CD4-positive, alpha-beta T cell (primary cell): ENCODE measurements at regions of chr22 and their contacts with region 1.

Region 1: DNA sequence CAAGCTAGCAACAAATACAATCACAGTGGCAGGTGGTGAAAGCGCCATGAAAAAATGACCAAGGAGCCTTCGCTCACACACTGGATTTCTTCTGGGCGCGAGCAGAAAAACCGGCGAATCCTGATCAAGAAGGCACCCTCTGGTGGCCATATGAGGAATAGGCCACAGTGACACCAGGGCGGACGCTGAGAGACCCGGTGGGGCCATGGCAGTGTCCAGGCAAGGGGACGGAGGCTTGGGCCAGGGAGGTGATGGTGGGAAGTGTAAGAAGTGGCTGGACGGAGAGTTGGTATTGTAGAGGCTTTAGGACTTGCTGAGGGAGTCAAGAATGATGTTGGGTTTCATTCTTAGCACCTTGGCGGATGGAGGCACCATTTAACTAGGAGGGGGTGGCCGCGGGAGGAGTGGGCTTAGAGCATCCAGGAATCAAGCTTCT is 16.9 kb upstream of the RAC2 start:
- DNase-seq: peak in 13 of 14 experiments; percentile 49 to 81 (median 59)
- ATAC-seq: peak; percentile 80
- H3K4me3 ChIP-seq: no peak overlapping the region
- H3K4me3 Mint-ChIP-seq: no peak overlapping the region
- H3K27ac ChIP-seq: no peak overlapping the region
- H3K27ac Mint-ChIP-seq: peak overlapping the region; percentile 12
- H3K4me1 ChIP-seq: peaks cover 25% of the 10 kb centered on the region
- H3K4me1 Mint-ChIP-seq: peaks cover 24% of the 10 kb centered on the region
- H3K27me3 ChIP-seq: no peaks in the 10 kb centered on the region
- H3K27me3 Mint-ChIP-seq: no peaks in the 10 kb centered on the region
- CTCF ChIP-seq: peak; percentile 85

Region 2: DNA sequence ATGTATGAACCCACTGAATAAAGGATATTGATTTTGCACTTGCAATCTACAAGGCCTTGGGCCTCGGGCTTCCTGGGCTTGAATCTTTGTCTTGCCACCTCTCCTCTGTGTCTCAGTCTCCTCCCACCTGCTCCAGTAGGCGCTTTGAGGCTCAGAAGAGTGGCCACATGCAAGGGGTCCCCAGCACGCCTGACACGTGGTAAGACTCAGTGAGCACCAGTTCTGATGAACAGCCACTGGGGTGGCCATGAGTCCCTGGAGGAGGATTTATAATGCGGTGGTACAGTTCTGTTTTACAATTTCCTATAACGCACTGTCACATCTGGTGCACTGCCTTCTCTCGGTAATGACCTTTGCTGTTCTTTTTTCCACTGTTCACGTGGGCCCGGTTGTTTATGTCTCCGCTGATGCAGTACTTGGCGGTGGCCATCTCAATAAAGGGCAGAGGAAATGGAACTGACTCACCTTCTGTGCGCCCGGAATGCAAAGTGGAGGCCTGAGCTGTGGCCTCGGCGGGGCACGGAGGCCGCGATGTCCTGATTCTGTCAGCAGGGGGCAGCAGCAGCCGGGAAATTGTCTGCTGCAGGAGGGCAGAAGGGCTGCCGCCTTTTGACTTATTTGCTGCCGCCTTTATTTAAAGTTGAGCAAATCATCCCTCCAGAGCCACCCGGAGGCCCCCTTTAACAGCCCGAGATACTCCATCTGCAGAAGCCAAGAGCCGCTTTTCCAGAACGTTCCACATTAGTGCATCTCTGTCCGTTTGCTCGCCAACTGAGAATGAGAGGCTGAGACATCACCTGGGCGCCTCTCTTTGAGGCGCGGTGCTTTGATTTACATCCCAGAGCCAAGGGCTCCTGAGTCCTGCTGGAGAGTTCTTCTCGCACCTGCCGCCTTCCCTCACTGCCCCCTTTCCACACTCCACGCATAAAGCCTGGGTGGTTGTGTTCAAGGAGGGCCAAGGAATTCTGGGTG is 479.0 kb before region 1 on chr22:
- CTCF ChIA-PET with region 1: no interaction called
- POLR2A ChIA-PET with region 1: no interaction called
- intact Hi-C with region 1: loop called in 1 of 2 experiments (anchors 2 kb)
- DNase-seq: peak; percentile 73 to 95 (median 87)
- ATAC-seq: peak; percentile 96
- H3K4me3 ChIP-seq: no peak overlapping the region
- H3K4me3 Mint-ChIP-seq: no peak overlapping the region
- H3K27ac ChIP-seq: no peak overlapping the region
- H3K27ac Mint-ChIP-seq: peak overlapping the region; percentile 33
- H3K4me1 ChIP-seq: peaks cover 16% of the 10 kb centered on the region
- H3K4me1 Mint-ChIP-seq: peaks cover 20% of the 10 kb centered on the region
- H3K27me3 ChIP-seq: no peaks in the 10 kb centered on the region
- H3K27me3 Mint-ChIP-seq: no peaks in the 10 kb centered on the region
- CTCF ChIP-seq: peak; percentile 97

Region 3: DNA sequence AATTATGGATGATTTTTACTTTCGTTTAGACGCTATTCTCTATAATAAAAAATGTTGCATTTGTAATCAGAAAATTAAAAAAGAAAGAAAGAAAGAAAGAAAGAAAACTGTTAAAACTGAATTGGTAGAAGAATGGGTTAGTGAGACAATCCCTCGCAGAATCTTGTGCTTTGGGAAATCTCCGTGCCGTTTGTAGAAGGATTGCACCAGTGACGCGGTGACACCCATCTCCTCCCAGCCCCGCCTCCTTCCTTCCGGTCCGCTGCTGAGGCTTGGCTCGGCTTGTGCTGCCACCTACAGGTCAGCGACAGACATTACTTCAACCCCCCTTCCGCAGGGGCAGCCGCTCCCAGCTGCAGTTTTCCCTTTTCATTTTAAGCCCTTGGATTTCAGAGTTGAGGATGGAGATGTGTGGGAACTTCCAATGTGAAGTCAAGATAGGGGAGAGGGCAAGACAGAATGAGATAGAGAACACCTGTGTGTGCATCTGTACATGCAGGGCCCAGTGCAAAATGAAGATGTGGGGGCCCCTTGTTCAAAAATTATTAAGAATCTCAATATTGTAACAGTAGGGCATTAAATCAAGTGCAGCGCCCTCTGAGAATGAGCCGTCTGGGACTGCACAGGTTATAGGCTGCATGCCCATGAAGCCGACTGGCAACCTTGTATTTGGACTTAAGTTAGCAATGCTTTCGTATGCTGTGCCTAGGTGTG is 282.8 kb before region 1 on chr22:
- CTCF ChIA-PET with region 1: no interaction called
- POLR2A ChIA-PET with region 1: no interaction called
- intact Hi-C with region 1: no loop called
- DNase-seq: peak; percentile 83 to 95 (median 88)
- ATAC-seq: peak; percentile 88
- H3K4me3 ChIP-seq: peak overlapping the region; percentile 77
- H3K4me3 Mint-ChIP-seq: peak overlapping the region; percentile 97
- H3K27ac ChIP-seq: peak overlapping the region; percentile 16 to 62
- H3K27ac Mint-ChIP-seq: peak overlapping the region; percentile 92
- H3K4me1 ChIP-seq: peaks cover 15% of the 10 kb centered on the region
- H3K4me1 Mint-ChIP-seq: peaks cover 8% of the 10 kb centered on the region
- H3K27me3 ChIP-seq: peaks cover 0 to 5% of the 10 kb centered on the region in 2 experiments
- H3K27me3 Mint-ChIP-seq: peaks cover 5% of the 10 kb centered on the region
- CTCF ChIP-seq: peak; percentile 88

Region 4: DNA sequence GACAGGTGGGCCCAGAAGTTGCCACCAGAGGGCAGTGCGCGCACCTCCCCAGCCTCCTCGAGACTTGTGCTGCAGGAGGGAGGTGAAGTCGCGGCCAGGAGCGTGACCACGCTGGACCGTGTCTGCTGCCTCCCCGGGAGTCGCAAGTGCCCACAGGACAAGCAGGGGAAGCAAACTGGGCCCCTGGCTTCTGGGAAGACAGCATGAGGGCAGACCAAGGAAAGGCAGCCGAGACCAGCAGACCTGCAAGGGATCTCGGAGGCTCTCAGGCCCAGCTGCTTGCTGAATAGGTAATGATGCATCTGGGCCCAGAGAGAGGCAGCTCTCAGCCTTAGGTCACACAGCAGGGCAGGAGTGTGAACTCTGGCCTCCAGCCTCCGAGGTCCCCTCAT is 94.2 kb before region 1 on chr22:
- CTCF ChIA-PET with region 1: interaction called, 4 read pairs
- POLR2A ChIA-PET with region 1: no interaction called
- intact Hi-C with region 1: loop called (anchors 2 kb)
- DNase-seq: peak; percentile 68 to 91 (median 82)
- ATAC-seq: peak; percentile 59
- H3K4me3 ChIP-seq: peak overlapping the region; percentile 53
- H3K4me3 Mint-ChIP-seq: peak overlapping the region; percentile 69
- H3K27ac ChIP-seq: no peak overlapping the region
- H3K27ac Mint-ChIP-seq: peak overlapping the region; percentile 51
- H3K4me1 ChIP-seq: peaks cover 91% of the 10 kb centered on the region
- H3K4me1 Mint-ChIP-seq: peaks cover 82% of the 10 kb centered on the region
- H3K27me3 ChIP-seq: no peaks in the 10 kb centered on the region
- H3K27me3 Mint-ChIP-seq: no peaks in the 10 kb centered on the region
- CTCF ChIP-seq: peak; percentile 88

Region 5: GRCh38 chr22:37193629-37194191 is 67.2 kb before region 1 on chr22:
- CTCF ChIA-PET with region 1: interaction called, 21 read pairs
- POLR2A ChIA-PET with region 1: no interaction called
- intact Hi-C with region 1: no loop called
- DNase-seq: peak in 4 of 14 experiments; percentile 47 to 81 (median 70)
- ATAC-seq: peak; percentile 60
- H3K4me3 ChIP-seq: peak overlapping the region; percentile 18
- H3K4me3 Mint-ChIP-seq: peak overlapping the region; percentile 9
- H3K27ac ChIP-seq: peak overlapping the region; percentile 46 to 47
- H3K27ac Mint-ChIP-seq: peak overlapping the region; percentile 100
- H3K4me1 ChIP-seq: peaks cover 53% of the 10 kb centered on the region
- H3K4me1 Mint-ChIP-seq: peaks cover 60% of the 10 kb centered on the region
- H3K27me3 ChIP-seq: no peaks in the 10 kb centered on the region
- H3K27me3 Mint-ChIP-seq: no peaks in the 10 kb centered on the region
- CTCF ChIP-seq: no peak

Region 6: DNA sequence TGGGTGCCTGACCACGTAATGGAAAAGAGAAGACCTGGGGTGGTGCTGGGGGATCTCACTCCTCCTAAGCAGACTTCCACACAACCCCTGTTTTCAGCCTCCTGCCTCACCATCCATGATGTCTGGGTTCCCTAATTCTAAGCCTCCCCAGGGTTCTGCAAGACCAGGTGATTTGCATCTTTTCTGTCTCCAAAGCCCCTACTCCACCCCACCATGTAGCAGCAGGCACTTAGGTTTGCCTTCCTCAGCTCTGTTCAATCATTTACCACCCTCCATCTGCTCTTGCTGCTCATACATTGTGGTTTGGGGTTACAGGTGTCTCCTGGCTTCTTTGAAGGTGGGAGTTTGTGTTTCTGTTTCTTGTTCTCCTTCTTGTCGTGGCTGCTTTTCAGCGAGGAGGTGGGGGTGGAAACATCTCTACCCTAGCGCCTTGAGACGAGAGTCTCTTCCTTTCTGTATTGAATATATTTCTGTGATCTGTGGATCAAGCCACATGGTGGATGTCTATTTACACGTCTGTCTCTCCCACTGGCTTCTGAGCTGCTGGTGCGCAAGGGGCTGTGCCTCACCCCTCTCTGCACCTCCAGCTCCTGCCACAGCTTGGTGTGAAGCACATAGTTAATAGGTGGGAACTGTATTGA is 42.0 kb before region 1 on chr22:
- CTCF ChIA-PET with region 1: interaction called, 12 read pairs
- POLR2A ChIA-PET with region 1: interaction called, 6 read pairs
- intact Hi-C with region 1: loop called (anchors 2 to 5 kb)
- DNase-seq: peak; percentile 54 to 93 (median 74)
- ATAC-seq: peak; percentile 80
- H3K4me3 ChIP-seq: peak overlapping the region; percentile 49
- H3K4me3 Mint-ChIP-seq: peak overlapping the region; percentile 64
- H3K27ac ChIP-seq: peak overlapping the region; percentile 71 to 82
- H3K27ac Mint-ChIP-seq: peak overlapping the region; percentile 84
- H3K4me1 ChIP-seq: peaks cover 76% of the 10 kb centered on the region
- H3K4me1 Mint-ChIP-seq: peaks cover 93% of the 10 kb centered on the region
- H3K27me3 ChIP-seq: no peaks in the 10 kb centered on the region
- H3K27me3 Mint-ChIP-seq: no peaks in the 10 kb centered on the region
- CTCF ChIP-seq: no peak

Region 7: GRCh38 chr22:37229805-37230672 is 30.9 kb before region 1 on chr22:
- CTCF ChIA-PET with region 1: interaction called, 14 read pairs
- POLR2A ChIA-PET with region 1: interaction called, 6 read pairs
- intact Hi-C with region 1: loop called in 1 of 2 experiments (anchors 2 kb)
- DNase-seq: peak; percentile 79 to 96 (median 88)
- ATAC-seq: peak; percentile 78
- H3K4me3 ChIP-seq: peak overlapping the region; percentile 35
- H3K4me3 Mint-ChIP-seq: peak overlapping the region; percentile 83
- H3K27ac ChIP-seq: peak overlapping the region; percentile 96 to 97
- H3K27ac Mint-ChIP-seq: peak overlapping the region; percentile 97
- H3K4me1 ChIP-seq: peaks cover 97% of the 10 kb centered on the region
- H3K4me1 Mint-ChIP-seq: peaks cover 90% of the 10 kb centered on the region
- H3K27me3 ChIP-seq: no peaks in the 10 kb centered on the region
- H3K27me3 Mint-ChIP-seq: no peaks in the 10 kb centered on the region
- CTCF ChIP-seq: no peak

Region 8: DNA sequence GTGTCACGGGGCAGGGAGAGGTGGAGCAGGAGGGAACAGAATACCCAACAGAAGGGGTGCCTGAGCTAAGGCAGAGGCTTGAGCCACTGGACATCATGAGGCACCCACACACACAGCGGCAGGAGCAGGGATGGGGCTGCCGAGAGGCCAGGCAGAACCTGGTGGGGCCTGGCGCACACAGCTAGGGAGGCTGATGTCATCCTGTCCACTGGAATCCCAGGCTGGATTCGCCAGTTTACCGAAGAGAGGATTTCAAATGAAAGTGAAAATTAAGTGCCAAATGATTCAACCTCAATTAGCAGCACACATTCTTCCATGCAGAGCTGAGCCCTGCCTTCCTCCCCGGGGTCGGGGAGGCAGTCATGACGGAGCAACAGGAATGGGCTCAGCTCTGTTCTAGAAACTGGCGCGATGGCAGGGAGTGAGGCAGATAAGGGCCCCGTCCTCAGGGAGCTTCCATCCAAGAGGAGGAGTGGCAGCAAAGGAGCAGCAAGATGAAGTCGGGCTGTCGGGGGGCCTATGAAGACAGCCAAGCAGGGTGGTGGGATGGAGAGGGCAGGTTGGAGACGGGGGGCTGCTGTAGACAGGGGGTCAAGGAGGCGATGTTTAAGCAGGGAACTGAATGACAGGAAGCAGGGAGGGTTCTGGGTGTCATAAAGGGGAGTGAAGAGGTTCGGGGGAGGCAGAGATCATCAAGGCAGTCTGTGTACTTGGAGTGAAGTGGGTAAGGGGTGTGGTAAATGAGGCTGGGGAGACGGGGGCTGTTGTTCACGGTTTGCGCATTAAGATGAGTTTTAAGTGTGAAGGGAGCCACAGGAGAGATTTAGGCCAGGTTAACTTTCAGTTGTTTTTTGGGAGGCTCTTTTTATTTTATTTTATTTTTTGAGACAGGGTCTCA is 23.3 kb before region 1 on chr22:
- CTCF ChIA-PET with region 1: interaction called, 139 read pairs
- POLR2A ChIA-PET with region 1: interaction called, 57 read pairs
- intact Hi-C with region 1: loop called (anchors 1 kb)
- DNase-seq: peak in 5 of 14 experiments; percentile 18 to 46 (median 38)
- ATAC-seq: peak; percentile 13
- H3K4me3 ChIP-seq: peak overlapping the region; percentile 34
- H3K4me3 Mint-ChIP-seq: peak overlapping the region; percentile 95
- H3K27ac ChIP-seq: peak overlapping the region; percentile 73 to 96
- H3K27ac Mint-ChIP-seq: peak overlapping the region; percentile 97
- H3K4me1 ChIP-seq: peaks cover 100% of the 10 kb centered on the region
- H3K4me1 Mint-ChIP-seq: peaks cover 98% of the 10 kb centered on the region
- H3K27me3 ChIP-seq: no peaks in the 10 kb centered on the region
- H3K27me3 Mint-ChIP-seq: no peaks in the 10 kb centered on the region
- CTCF ChIP-seq: no peak